GM12878 (cell line): ENCODE measurements at regions of chr2 and their contacts with region 1.

Region 1: DNA sequence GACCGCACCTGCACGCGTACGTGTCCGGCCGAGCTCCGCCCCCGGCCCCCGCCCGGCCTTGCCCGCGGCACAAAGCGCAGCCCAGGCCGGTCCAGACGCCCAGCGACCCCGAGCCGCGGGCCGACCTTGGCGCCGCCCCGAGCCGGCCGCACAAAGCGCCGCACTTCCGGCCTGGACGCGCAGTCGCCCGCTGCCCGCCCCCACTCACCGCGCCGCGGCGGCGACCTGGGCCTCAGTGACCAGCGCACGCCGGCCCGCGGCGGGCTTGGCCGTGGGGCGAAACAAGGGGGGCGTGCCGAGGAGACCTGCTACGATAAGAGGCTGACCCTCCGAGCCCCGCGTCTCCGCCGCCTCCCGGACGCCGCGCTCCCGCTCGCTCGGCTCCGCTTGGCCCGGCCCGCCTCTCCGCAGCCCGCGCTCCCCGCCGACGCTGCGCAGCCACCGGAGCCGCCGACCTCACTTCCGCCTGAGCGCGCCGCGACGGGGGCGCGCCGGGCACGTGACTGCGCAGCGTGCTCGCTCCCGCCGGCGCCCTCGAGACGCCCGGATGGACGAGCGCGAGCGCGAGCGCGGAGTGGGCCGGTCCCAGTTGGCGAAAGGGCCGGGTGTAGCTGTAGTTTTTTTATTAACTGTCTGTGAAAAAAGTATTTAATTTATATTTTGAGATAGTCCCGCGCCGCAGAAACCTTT is at the start of gene FAM168B:
- DNase-seq: peak; percentile 27
- ATAC-seq: peak; percentile 87
- H3K4me3 ChIP-seq: peak within 1 kb of the TSS; percentile 90
- H3K27ac ChIP-seq: peak within 1 kb of the TSS; percentile 89
- H3K4me1 ChIP-seq: peaks cover 3% of the 10 kb centered on the region; the same call in 1 of the 2 replicates
- H3K27me3 ChIP-seq: no peaks in the 10 kb centered on the region
- CTCF ChIP-seq: no peak
- EP300 ChIP-seq: no peak
- POLR2A ChIP-seq: peak; percentile 89
- RAD21 ChIP-seq: no peak
- polyA plus RNA-seq, gene FAM168B: 3.5 to 4.1 TPM

Region 2: DNA sequence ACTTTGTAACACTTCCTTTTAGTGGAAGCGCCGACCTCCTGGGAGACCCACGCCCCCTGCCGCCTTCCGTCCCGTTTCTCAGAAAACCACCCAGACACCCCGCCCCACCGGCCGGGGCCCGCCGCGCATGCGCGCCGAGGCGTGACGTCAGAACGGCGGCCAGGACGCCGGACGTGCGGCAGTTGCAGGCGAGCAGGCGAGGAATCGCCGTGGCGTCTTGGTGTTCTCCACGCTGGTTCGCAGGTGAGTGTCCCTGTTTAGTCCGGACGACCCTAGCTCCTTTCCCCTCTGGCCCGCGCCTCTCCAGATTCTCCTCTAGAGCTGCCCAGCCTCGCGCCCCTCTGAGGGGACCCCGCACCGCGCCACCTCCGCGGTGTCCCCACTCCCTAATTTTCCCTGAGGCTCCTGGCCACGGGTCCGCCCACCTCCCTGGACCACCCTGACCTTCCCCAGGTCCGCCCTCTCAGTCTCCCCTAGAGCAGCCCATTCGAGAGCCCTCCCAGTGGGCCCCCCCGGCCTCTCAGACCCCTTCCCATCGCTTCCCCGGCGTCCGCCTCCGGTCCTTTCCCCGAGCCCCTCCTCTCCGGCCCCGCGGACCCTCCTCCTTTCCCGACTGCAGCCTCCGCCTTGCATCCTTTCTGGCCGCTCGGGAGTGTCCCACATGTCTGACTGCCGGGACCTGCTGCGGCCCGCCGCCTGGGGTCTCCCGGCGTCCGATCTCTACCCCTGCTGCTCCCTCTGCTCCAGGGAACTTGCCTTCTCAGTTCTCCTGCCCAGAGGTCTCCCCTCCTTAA is 12.2 kb after region 1 on chr2 and contains the start of gene PLEKHB2:
- CTCF ChIA-PET with region 1: interaction called, 31 read pairs
- POLR2A ChIA-PET with region 1: interaction called, 45 read pairs
- RAD21 ChIA-PET with region 1: interaction called, 18 read pairs
- SMC1A ChIA-PET with region 1: interaction called, 34 read pairs
- in situ Hi-C with region 1: no loop called
- intact Hi-C with region 1: no loop called
- DNase-seq: peak; percentile 66
- ATAC-seq: peak; percentile 87
- H3K4me3 ChIP-seq: peak within 1 kb of the TSS; percentile 100
- H3K27ac ChIP-seq: peak within 1 kb of the TSS; percentile 77
- H3K4me1 ChIP-seq: peaks cover 6% of the 10 kb centered on the region
- H3K27me3 ChIP-seq: no peaks in the 10 kb centered on the region
- CTCF ChIP-seq: peak in 2 of 3 experiments; percentile 11 to 20; a peak in 2 of 6 replicates
- EP300 ChIP-seq: no peak; a peak in 1 of 4 replicates
- POLR2A ChIP-seq: peak; percentile 96
- RAD21 ChIP-seq: no peak
- polyA plus RNA-seq, gene PLEKHB2: 12.3 to 16.4 TPM